Transverse colon (tissue), 4 donors: ENCODE measurements at regions of chr11 and their contacts with region 1.

Region 1: GRCh38 chr11:44893846-44894617 is 56.7 kb downstream of the TP53I11 start:
- DNase-seq: peak; percentile 58
- H3K4me3 ChIP-seq: no peak overlapping the region
- H3K27ac ChIP-seq: peak overlapping the region; percentile 48 to 81 (median 68)
- H3K4me1 ChIP-seq: peaks cover 0 to 7% (median 3%) of the 10 kb centered on the region in 4 donors
- H3K27me3 ChIP-seq: peaks cover 3% of the 10 kb centered on the region
- CTCF ChIP-seq: peak; percentile 70 to 78 (median 78)
- EP300 ChIP-seq: no peak
- POLR2A ChIP-seq: no peak

Region 2: DNA sequence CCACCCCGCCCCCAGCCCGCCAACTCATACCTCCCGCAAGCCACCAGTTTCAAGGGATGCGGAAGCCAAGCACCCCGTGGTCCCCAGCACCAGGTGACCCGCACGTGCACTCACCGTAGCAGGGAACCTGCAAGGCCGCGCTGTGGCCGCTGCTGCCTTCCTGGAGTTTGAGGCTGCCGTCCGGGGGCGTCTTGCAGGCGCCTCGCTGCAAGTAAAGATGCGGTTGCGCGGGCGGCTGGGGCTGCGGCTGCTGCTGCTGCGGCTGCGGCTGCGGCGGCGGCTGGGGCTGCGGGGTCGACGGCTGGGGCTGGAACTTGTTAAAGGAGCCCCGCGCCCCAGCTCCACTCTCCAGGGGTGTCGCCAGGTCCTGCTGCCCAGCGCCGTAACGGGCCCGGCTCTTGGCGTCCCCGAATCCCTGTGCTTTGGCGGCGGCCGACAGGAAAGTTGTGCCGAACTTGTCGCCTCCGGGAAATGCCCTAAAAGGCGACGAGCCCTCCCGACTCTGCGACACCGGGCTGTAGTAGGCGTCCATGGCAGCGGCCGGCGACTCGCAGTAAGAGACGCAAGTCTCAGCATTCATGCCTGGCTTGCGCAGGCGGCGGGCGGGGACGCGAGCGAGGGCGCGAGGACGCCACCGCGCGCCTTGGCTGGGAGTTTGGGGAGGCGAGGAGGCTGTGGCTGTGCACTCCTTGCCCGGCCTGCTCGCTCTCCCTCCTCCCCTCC is 584.4 kb before region 1 on chr11 and contains the start of gene ALX4:
- in situ Hi-C with region 1: loop called in 1 of 4 experiments (anchors 25 kb)
- intact Hi-C with region 1: no loop called
- DNase-seq: no peak
- H3K4me3 ChIP-seq: peak within 1 kb of the TSS in 2 of 4 donors; percentile 10 to 29
- H3K27ac ChIP-seq: no peak within 1 kb of the TSS
- H3K4me1 ChIP-seq: peaks cover 9 to 37% (median 31%) of the 10 kb centered on the region in 4 donors
- H3K27me3 ChIP-seq: peaks cover 100% of the 10 kb centered on the region
- CTCF ChIP-seq: no peak
- EP300 ChIP-seq: no peak
- POLR2A ChIP-seq: no peak
- total RNA-seq, gene ALX4: not detected

Region 3: GRCh38 chr11:44709966-44710365 is 184.1 kb before region 1 on chr11:
- in situ Hi-C with region 1: no loop called
- intact Hi-C with region 1: no loop called
- DNase-seq: no peak
- H3K4me3 ChIP-seq: no peak overlapping the region
- H3K27ac ChIP-seq: no peak overlapping the region
- H3K4me1 ChIP-seq: no peaks in the 10 kb centered on the region
- H3K27me3 ChIP-seq: no peaks in the 10 kb centered on the region
- CTCF ChIP-seq: no peak
- EP300 ChIP-seq: no peak
- POLR2A ChIP-seq: no peak